MCF 10A (cell line): ENCODE measurements at regions of chr10 and their contacts with region 1.

Region 1: DNA sequence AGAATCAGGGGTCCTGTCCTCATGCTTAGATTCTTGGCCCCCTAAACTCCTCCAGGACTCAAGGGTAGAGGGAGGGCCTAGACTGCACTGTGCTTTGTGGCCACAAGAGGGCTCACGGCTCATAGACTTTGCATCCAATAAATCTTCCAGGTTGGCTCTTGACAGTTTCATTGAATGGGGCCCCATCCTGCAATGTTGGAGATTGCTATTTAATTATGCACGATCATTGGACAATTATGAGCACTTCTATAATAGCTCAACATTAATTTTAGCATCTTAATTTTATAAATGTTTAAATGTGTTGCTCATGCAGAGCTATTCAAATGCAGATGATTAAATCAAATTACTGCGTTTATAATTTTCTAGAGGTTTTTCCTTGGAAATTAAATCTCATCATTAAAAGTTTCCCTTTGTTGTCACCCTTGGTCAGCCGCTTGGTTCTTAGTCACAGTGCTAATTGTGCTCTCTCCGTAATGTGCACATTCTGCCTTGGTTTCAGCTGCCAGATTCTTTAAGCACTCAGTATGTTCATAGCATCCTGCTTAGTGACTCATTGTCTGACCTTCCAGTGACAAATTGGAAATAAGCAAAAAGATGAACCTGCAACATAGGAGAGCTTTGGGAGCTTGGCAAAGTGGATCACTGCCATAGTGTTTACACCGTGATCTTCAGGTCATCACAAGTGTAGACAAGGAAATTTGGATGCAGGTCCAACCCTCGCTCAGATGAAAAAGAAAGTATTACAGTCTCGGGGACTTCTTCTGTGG is 33.4 kb upstream of the PLPP4 start:
- DNase-seq: peak; percentile 70
- H3K4me3 Mint-ChIP-seq: no peak overlapping the region
- H3K27ac Mint-ChIP-seq: no peak overlapping the region
- H3K4me1 Mint-ChIP-seq: peaks cover 26% of the 10 kb centered on the region
- H3K27me3 Mint-ChIP-seq: peaks cover 4% of the 10 kb centered on the region
- CTCF ChIP-seq: peak; percentile 91

Region 2: GRCh38 chr10:120253131-120253530 is 170.5 kb before region 1 on chr10:
- CTCF ChIA-PET with region 1: no interaction called
- POLR2A ChIA-PET with region 1: no interaction called
- intact Hi-C with region 1: no loop called
- DNase-seq: no peak
- H3K4me3 Mint-ChIP-seq: no peak overlapping the region
- H3K27ac Mint-ChIP-seq: no peak overlapping the region
- H3K4me1 Mint-ChIP-seq: no peaks in the 10 kb centered on the region
- H3K27me3 Mint-ChIP-seq: peaks cover 18% of the 10 kb centered on the region
- CTCF ChIP-seq: no peak

Region 3: GRCh38 chr10:120409816-120410215 is 13.8 kb before region 1 on chr10:
- CTCF ChIA-PET with region 1: interaction called, 15 read pairs
- POLR2A ChIA-PET with region 1: interaction called, 3 read pairs
- intact Hi-C with region 1: no loop called
- DNase-seq: no peak
- H3K4me3 Mint-ChIP-seq: no peak overlapping the region
- H3K27ac Mint-ChIP-seq: no peak overlapping the region
- H3K4me1 Mint-ChIP-seq: peaks cover 6% of the 10 kb centered on the region
- H3K27me3 Mint-ChIP-seq: peaks cover 18% of the 10 kb centered on the region
- CTCF ChIP-seq: no peak

Region 4: GRCh38 chr10:120508393-120508792 is 84.8 kb after region 1 on chr10:
- CTCF ChIA-PET with region 1: interaction called, 5 read pairs
- POLR2A ChIA-PET with region 1: no interaction called
- intact Hi-C with region 1: loop called (anchors 5 kb)
- DNase-seq: peak; percentile 97
- H3K4me3 Mint-ChIP-seq: peak overlapping the region; percentile 22
- H3K27ac Mint-ChIP-seq: peak overlapping the region; percentile 93
- H3K4me1 Mint-ChIP-seq: peaks cover 81% of the 10 kb centered on the region
- H3K27me3 Mint-ChIP-seq: no peaks in the 10 kb centered on the region
- CTCF ChIP-seq: no peak

Region 5: GRCh38 chr10:120610791-120611190 is 187.2 kb after region 1 on chr10:
- CTCF ChIA-PET with region 1: interaction called, 11 read pairs
- POLR2A ChIA-PET with region 1: no interaction called
- intact Hi-C with region 1: no loop called
- DNase-seq: no peak
- H3K4me3 Mint-ChIP-seq: no peak overlapping the region
- H3K27ac Mint-ChIP-seq: no peak overlapping the region
- H3K4me1 Mint-ChIP-seq: no peaks in the 10 kb centered on the region
- H3K27me3 Mint-ChIP-seq: peaks cover 32% of the 10 kb centered on the region
- CTCF ChIP-seq: no peak

Region 6: GRCh38 chr10:120729547-120729946 is 305.9 kb after region 1 on chr10:
- CTCF ChIA-PET with region 1: interaction called, 178 read pairs
- POLR2A ChIA-PET with region 1: interaction called, 5 read pairs
- intact Hi-C with region 1: no loop called
- DNase-seq: no peak
- H3K4me3 Mint-ChIP-seq: no peak overlapping the region
- H3K27ac Mint-ChIP-seq: no peak overlapping the region
- H3K4me1 Mint-ChIP-seq: peaks cover 13% of the 10 kb centered on the region
- H3K27me3 Mint-ChIP-seq: no peaks in the 10 kb centered on the region
- CTCF ChIP-seq: no peak

Region 7: DNA sequence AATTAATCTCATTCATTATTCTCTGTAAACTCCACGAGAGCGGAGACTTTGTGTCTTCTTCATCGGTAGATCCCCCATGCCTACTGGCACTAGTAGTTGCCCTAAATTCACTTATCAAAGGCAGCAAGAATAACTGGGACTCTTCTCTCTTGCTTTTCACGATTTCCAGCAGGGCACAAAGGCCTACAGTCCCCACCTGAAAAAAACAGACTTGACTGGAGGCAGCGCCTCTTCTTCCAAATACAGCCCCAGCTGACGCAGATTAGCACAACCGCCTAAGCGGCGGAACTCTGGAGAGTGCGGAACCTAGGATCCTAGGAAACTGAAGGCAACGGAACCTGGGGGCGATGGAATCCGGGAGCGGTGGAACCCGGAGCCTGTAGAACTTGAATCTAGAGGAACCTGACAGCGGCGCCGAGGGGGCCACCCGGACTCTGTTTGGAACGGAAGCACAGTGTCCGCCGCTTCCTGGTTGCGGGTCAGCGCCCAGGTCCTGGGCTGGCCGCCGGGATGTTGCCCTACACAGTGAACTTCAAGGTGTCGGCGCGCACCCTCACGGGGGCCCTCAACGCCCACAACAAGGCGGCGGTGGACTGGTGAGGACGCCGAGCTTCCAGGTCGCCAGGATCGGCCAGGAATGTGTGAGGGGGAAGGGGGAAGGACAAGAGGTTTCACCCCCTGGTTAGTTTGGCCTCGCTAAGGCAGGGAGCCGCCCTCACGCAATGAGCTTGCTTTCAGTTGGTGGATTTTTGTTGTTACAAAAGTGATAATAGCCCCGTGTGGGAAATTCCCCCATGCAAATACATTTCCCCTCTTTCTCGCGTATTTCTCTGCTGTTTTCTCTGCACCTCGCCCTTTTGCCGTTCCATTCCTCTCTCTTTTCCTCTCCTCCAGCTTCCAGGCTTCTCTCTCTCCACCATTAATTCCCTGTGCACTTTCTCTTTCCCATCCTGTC is 427.6 kb after region 1 on chr10 and contains the start of gene WDR11:
- CTCF ChIA-PET with region 1: interaction called, 4 read pairs
- POLR2A ChIA-PET with region 1: interaction called, 6 read pairs
- intact Hi-C with region 1: loop called (anchors 1 kb)
- DNase-seq: peak; percentile 92
- H3K4me3 Mint-ChIP-seq: peak within 1 kb of the TSS; percentile 90
- H3K27ac Mint-ChIP-seq: peak within 1 kb of the TSS; percentile 88
- H3K4me1 Mint-ChIP-seq: peaks cover 26% of the 10 kb centered on the region
- H3K27me3 Mint-ChIP-seq: peaks cover 3% of the 10 kb centered on the region
- CTCF ChIP-seq: no peak
- total RNA-seq, gene WDR11: 49.2 and 61.0 TPM in 2 replicates